PC-3 (cell line): ENCODE measurements at regions of chr1 and their contacts with region 1.

Region 1: DNA sequence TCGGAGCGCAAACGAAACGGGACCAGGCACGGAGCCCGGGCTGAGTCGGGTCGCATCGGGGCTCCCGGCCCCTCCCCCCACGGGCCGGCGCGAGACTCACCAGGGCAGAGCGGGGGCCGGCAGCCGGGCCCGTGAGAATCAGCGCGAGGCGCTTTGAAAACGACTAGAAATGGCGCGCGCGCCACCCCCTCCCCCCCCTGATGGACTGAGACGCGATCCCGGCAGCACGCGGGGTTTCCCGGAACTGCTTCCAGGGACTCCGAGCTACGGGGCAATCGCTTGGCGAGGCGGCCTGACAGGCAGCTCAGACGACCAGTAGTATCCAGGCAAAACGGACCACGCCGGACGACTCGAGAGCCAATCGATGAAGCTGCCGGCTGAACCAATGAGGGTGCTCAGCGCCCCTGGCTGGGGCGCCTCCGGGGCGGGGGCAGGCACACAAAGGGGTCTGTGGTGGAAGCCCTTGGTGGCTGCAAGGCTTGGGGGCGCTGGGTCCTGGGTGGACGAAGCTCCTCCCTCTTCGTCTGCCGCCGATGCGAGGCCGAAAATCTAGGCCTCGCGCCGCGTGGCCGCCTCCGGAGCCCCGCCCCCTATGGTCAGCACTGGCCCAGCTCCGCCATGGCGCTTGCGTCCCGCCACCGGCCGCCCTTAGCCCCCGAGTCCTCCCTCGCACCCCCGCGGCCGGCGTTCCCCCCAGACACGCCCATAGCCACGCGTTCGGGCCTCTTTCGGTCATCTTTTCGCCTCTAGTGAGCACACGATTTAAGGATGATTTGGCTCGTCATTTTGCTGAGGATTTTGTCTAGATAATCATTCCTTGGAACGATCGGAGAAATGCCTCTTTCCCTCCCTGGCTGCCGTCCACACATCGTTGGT is at the start of gene HNRNPR:
- DNase-seq: peak; percentile 99
- ATAC-seq: peak; percentile 95
- H3K4me3 ChIP-seq: peak within 1 kb of the TSS; percentile 76
- H3K27ac ChIP-seq: peak within 1 kb of the TSS; percentile 86
- H3K4me1 ChIP-seq: peaks cover 26% of the 10 kb centered on the region
- H3K27me3 ChIP-seq: no peaks in the 10 kb centered on the region
- CTCF ChIP-seq: no peak
- total RNA-seq, gene HNRNPR: 141 and 193 TPM in 2 replicates

Region 2: GRCh38 chr1:23019094-23019862 is 325.1 kb before region 1 on chr1 and contains the start of gene KDM1A:
- CTCF ChIA-PET with region 1: no interaction called
- POLR2A ChIA-PET with region 1: interaction called, 11 read pairs
- intact Hi-C with region 1: no loop called
- DNase-seq: peak; percentile 98
- ATAC-seq: peak; percentile 95
- H3K4me3 ChIP-seq: peak within 1 kb of the TSS; percentile 94
- H3K27ac ChIP-seq: peak within 1 kb of the TSS; percentile 79
- H3K4me1 ChIP-seq: peaks cover 24% of the 10 kb centered on the region; the same call in 1 of the 2 replicates
- H3K27me3 ChIP-seq: no peaks in the 10 kb centered on the region
- CTCF ChIP-seq: no peak
- total RNA-seq, gene KDM1A: 186 and 229 TPM in 2 replicates

Region 3: DNA sequence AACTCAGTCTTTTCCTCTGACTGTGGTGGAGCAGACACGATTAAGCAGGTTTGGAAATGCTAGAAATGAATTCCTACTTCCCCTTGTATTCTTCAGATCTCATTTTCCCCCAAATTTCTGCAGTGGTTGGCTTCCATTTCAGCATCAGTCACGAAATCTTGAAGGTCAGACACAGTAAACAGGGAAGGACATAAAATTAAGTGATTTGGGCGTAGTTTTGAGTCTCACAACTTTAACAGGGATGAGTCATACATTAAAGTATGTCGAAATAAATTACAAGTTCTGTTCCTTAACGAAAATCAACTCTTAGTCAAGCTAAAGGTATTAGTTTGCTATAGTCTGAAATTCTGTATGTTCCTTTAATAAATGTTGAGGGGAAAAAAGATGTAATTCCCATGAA is 61.4 kb before region 1 on chr1:
- CTCF ChIA-PET with region 1: no interaction called
- POLR2A ChIA-PET with region 1: interaction called, 8 read pairs
- intact Hi-C with region 1: loop called (anchors 2 kb)
- DNase-seq: peak; percentile 84
- ATAC-seq: peak; percentile 62
- H3K4me3 ChIP-seq: peak overlapping the region; percentile 6; the same call in 1 of the 2 replicates
- H3K27ac ChIP-seq: peak overlapping the region; percentile 73
- H3K4me1 ChIP-seq: peaks cover 44% of the 10 kb centered on the region
- H3K27me3 ChIP-seq: no peaks in the 10 kb centered on the region
- CTCF ChIP-seq: no peak

Region 4: DNA sequence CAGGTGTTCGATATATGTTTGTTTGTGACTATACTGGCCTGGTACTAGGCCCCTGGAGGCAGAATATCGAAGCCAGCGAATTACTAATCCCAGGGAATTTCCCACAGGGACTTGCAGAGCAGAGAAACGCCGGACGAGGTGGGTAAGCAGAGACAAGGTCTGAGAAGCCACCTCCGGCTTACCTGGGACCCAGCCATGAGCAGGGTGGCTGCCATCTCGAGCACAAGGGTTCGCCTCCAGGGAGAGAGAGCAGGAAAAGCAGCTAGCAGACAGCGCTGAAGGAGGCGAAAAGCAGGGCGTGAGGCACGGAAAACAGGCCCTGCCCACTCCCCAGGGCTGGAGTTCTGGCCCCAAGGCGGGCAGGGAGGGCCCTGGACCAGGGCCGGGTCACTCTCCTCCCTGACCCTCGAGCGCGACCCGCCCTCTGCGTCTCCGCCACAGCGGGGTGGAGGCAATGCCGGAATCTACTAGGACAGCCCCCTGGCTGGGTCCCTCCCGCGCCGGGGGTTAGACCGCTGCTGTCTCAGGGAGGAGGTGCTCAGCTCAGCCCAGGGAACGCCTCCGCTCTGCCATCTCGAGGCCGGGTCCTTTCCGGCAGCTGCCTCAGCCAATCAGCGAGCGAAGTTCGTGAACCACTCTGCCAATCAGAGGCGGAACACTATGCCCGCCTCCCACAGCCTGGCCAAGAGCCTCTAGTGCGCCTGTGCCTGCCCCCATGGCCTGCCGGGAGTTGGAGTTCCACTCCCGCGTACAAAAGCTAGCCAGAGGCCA is 23.6 kb after region 1 on chr1:
- CTCF ChIA-PET with region 1: interaction called, 9 read pairs
- POLR2A ChIA-PET with region 1: interaction called, 59 read pairs
- intact Hi-C with region 1: loop called (anchors 1 kb)
- DNase-seq: peak; percentile 98
- ATAC-seq: peak; percentile 88
- H3K4me3 ChIP-seq: peak overlapping the region; percentile 93
- H3K27ac ChIP-seq: peak overlapping the region; percentile 74
- H3K4me1 ChIP-seq: peaks cover 26% of the 10 kb centered on the region
- H3K27me3 ChIP-seq: no peaks in the 10 kb centered on the region
- CTCF ChIP-seq: no peak

Region 5: GRCh38 chr1:23397908-23398307 is 53.6 kb after region 1 on chr1:
- CTCF ChIA-PET with region 1: no interaction called
- POLR2A ChIA-PET with region 1: no interaction called
- intact Hi-C with region 1: no loop called
- DNase-seq: no peak
- ATAC-seq: no peak
- H3K4me3 ChIP-seq: no peak overlapping the region
- H3K27ac ChIP-seq: no peak overlapping the region
- H3K4me1 ChIP-seq: peaks cover 7% of the 10 kb centered on the region
- H3K27me3 ChIP-seq: no peaks in the 10 kb centered on the region
- CTCF ChIP-seq: no peak

Region 6: DNA sequence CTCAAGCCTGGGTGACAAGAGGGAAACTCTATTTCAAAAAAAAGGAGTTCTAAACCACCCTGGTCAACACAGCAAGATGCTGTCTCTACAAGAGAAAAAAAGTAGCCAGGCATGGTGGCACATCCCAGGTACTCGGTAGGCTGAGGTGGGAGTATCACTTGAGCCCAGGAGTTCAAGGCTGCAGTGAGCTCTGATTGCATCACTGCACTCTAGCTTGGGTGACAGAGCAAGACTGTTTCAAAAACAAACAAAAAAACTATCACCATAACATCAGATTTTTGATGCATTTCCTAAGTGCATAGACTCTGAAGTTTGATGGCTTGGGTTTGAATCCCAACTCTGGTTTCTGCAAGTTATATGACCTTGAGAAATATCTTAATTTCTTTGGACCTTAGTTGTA is 408.6 kb after region 1 on chr1:
- CTCF ChIA-PET with region 1: no interaction called
- POLR2A ChIA-PET with region 1: interaction called, 10 read pairs
- intact Hi-C with region 1: no loop called
- DNase-seq: no peak
- ATAC-seq: no peak
- H3K4me3 ChIP-seq: no peak overlapping the region
- H3K27ac ChIP-seq: no peak overlapping the region
- H3K4me1 ChIP-seq: no peaks in the 10 kb centered on the region
- H3K27me3 ChIP-seq: no peaks in the 10 kb centered on the region
- CTCF ChIP-seq: no peak

Region 7: GRCh38 chr1:24673336-24673735 is 1329.0 kb after region 1 on chr1:
- CTCF ChIA-PET with region 1: no interaction called
- POLR2A ChIA-PET with region 1: no interaction called
- intact Hi-C with region 1: no loop called
- DNase-seq: no peak
- ATAC-seq: no peak
- H3K4me3 ChIP-seq: no peak overlapping the region
- H3K27ac ChIP-seq: no peak overlapping the region
- H3K4me1 ChIP-seq: peaks cover 2% of the 10 kb centered on the region; the same call in 1 of the 2 replicates
- H3K27me3 ChIP-seq: no peaks in the 10 kb centered on the region
- CTCF ChIP-seq: no peak